ENCODE measurements at regions of chr20 and their contacts with region 1.

Region 1: GRCh38 chr20:34538671-34539123 is 19.8 kb upstream of the MAP1LC3A start:
- DNase-seq: peak in 1 of 2 experiments; percentile 64
- ATAC-seq: peak; percentile 52 to 69; a peak in 3 of 6 replicates
- H3K4me3 ChIP-seq: no peak overlapping the region
- H3K27ac ChIP-seq: no peak overlapping the region
- H3K4me1 ChIP-seq: no peaks in the 10 kb centered on the region
- CTCF ChIP-seq: peak; percentile 72
- EP300 ChIP-seq: no peak
- POLR2A ChIP-seq: no peak
- RAD21 ChIP-seq: peak; percentile 49 to 59

Region 2: GRCh38 chr20:34102342-34102741 is 436.4 kb before region 1 on chr20:
- CTCF ChIA-PET with region 1: no interaction called
- POLR2A ChIA-PET with region 1: no interaction called
- DNase-seq: no peak
- ATAC-seq: no peak
- H3K4me3 ChIP-seq: no peak overlapping the region
- H3K27ac ChIP-seq: no peak overlapping the region
- H3K4me1 ChIP-seq: peaks cover 12% of the 10 kb centered on the region; the same call in 2 of the 3 replicates
- CTCF ChIP-seq: no peak
- EP300 ChIP-seq: no peak
- POLR2A ChIP-seq: no peak
- RAD21 ChIP-seq: no peak

Region 3: GRCh38 chr20:34549291-34549928 is 10.7 kb after region 1 on chr20:
- CTCF ChIA-PET with region 1: interaction called, 26 read pairs
- POLR2A ChIA-PET with region 1: no interaction called
- DNase-seq: peak in 1 of 2 experiments; percentile 65
- ATAC-seq: peak; percentile 37 to 54; a peak in 4 of 6 replicates
- H3K4me3 ChIP-seq: no peak overlapping the region
- H3K27ac ChIP-seq: no peak overlapping the region
- H3K4me1 ChIP-seq: peaks cover 12% of the 10 kb centered on the region
- CTCF ChIP-seq: no peak
- EP300 ChIP-seq: no peak
- POLR2A ChIP-seq: no peak
- RAD21 ChIP-seq: no peak